GM10248 (cell line): ENCODE measurements at regions of chr12 and their contacts with region 1.

Region 1: GRCh38 chr12:54958048-54958658 is 26.4 kb downstream of the TESPA1 start:
- DNase-seq: peak; percentile 40
- CTCF ChIP-seq: peak; percentile 75

Region 2: DNA sequence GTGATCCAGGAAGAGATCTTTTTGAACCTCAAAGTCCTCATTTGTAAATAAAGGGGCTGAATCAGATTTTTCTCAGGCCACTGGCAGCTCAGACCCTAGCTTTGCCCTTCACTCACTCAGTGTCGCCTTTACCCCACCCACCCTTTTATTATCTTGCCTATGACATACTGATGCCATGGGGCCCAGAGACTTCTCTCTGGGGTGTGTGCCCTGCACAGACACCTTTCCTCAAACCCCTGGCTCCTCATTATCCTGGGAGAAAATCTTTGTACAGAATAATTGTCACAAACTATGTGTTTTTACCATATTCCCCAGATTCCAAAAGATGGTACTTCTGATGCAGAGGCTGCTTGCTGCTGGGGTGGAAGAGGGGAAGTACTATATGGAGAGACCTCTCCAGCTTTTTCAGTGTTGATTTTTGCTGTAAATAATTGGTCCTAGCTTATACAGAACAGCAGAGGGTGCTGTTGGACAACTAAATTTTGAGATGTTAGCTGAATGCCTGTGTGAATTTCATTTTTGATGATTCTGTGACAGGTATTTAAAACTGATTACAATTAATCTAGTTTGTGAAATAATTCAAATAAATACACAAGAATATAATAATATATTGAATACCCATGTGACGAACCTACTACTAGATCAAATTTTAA is 256.1 kb before region 1 on chr12:
- CTCF ChIA-PET with region 1: interaction called, 16 read pairs
- POLR2A ChIA-PET with region 1: no interaction called
- DNase-seq: peak; percentile 42
- CTCF ChIP-seq: peak; percentile 51

Region 3: DNA sequence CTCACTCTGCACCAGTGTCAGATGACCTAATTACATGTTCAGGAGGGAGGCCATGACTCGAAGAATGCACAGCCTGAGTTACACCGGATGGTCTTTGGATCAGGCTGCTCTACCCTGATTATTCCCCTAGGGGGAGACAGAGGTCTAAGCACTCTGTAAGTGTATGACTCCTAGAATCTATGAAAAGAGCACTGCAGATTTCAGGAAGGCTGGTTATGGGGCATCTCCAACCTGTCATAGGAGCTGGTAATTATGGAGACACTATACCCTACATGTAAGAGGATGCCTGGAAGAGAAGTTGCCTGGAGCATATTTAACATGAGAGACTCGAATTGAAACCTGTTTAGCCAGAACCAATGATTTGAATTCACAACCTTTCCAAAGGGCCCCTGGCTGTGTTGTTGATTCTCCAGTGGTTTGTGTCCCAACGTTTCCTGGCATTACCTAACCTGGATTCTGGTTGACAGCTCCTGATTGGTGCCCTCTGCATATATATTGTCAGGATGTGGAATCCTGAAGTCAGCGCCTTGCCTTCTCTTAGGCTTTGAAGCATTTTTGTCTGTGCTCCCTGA is 104.1 kb before region 1 on chr12 and contains the start of gene MUCL1:
- CTCF ChIA-PET with region 1: interaction called, 20 read pairs
- POLR2A ChIA-PET with region 1: no interaction called
- DNase-seq: peak; percentile 46
- CTCF ChIP-seq: peak; percentile 83

Region 4: DNA sequence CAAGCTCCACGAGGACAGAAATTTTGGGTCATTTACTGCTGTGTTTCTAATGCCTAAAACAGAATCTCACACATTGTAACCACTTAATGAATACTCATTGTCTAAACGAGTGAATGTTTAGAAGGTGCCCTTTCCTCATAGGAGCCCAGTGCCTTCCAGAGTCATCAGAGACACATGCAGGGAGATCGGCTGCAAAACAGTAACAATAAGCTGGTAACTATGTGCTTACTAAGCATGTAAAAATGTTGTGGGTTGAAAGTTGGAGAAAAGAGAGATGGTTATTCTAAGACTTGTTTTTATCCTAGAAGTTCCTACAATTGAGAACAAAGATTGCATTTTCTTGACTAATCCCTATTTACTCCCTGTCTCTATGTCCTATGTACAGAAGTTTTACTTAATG is 19.0 kb after region 1 on chr12:
- CTCF ChIA-PET with region 1: interaction called, 59 read pairs
- POLR2A ChIA-PET with region 1: no interaction called
- DNase-seq: no peak
- CTCF ChIP-seq: no peak

Region 5: DNA sequence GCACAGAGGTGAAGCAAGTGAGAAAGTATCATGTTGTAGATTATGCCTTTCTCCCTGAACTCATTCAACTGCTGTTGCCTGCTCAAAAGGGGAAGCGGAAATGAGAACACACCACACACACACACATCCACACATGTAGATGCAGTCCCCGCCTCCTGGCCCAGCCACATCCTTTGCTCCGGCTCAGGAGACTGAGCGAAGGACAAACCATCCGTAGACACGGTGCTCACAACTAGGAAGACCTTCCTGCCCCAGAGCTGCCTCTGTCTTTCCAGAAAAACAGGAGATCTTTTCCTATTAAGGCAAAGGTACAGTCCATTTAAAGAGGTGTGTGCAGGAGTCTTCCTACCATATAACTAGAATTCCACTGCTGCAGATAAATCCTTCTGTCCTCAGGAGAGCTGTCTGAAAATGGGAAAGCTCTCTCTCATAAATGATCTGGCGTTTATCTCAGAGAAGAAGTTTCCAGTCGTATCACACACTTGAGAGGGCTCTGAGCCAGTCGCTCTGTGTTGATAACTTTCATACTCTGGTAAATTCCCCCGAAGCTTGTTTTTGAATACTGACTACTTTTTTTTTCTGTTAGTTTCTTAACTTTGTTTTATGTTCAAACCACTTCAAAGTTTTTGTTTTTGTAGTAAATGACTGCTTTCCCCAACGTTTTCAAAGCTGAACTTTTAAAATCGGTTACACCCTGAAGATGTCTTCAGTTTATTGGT is 26.7 kb after region 1 on chr12 and contains the start of gene TESPA1:
- CTCF ChIA-PET with region 1: interaction called, 11 read pairs
- POLR2A ChIA-PET with region 1: no interaction called
- DNase-seq: peak; percentile 81
- CTCF ChIP-seq: no peak

Region 6: GRCh38 chr12:55015944-55016343 is 57.8 kb after region 1 on chr12:
- CTCF ChIA-PET with region 1: no interaction called
- POLR2A ChIA-PET with region 1: no interaction called
- DNase-seq: no peak
- CTCF ChIP-seq: no peak